Motor neuron (in vitro differentiated cells): ENCODE measurements at regions of chrX and their contacts with region 1.

Region 1: GRCh38 chrX:151177141-151178027 is 1.0 kb downstream of the GPR50 start:
- ATAC-seq: peak; percentile 8 to 72 (median 62)
- H3K4me3 ChIP-seq: peak overlapping the region; percentile 16 to 32 (median 28)
- H3K27ac ChIP-seq: no peak overlapping the region
- H3K4me1 ChIP-seq: peaks cover 0 to 3% of the 10 kb centered on the region in 2 donors

Region 2: DNA sequence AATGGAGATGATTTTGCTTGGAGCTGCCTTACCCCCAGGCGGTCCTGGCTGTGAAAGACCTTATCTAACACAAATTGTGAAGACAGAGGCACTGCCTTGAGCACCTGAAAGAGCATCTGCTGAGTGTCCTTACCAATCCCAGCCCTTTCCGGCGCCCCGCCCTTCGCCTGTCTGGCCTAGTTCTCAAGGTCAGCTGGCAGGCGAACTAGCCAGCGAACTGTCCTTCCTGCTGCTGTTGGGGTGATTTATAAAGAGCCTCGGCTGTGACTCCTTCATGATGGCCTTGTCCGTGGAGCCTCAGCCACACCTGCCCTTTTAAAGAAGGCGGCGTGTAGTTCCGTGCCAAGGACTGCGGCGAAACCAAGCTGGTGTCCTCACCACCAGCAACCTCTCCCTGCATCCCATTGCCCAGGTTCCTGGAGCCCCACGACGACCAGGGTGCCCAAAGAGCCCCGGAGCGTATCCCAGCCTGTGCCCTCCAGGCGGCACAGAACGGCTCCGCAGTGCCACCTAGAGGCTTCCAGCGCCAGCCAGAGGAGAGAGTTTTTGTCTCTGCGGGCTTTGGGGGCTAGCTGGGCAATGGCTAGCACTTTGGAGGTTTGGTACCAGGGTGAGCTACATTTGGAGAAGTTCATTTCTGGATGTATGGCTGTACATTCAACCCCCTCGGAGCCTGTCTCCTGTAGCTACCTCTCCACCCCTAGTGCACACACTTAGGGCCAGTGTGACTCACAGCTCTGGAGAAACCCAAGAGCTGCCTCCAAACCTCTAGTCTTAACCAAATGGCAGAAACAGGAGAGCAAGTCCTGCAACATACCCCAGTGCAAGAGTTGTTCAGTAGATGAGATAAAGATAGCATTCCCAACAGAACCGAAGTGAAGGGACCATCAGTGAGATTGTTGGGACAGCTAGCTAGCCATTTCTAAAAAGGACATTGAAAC is 182.8 kb after region 1 on chrX:
- in situ Hi-C with region 1: loop called in 3 of 9 experiments (anchors 25 kb)
- ATAC-seq: peak; percentile 39 to 96 (median 68)
- H3K4me3 ChIP-seq: peak overlapping the region in 1 of 5 donors; percentile 11
- H3K27ac ChIP-seq: no peak overlapping the region
- H3K4me1 ChIP-seq: no peaks in the 10 kb centered on the region

Region 3: GRCh38 chrX:151384807-151385206 is 207.4 kb after region 1 on chrX:
- in situ Hi-C with region 1: no loop called
- ATAC-seq: no peak
- H3K4me3 ChIP-seq: no peak overlapping the region
- H3K27ac ChIP-seq: no peak overlapping the region
- H3K4me1 ChIP-seq: no peaks in the 10 kb centered on the region